Activated CD4-positive, alpha-beta T cell treated with anti-CD3 and anti-CD28 coated beads for 36 hours (primary cell): ENCODE measurements at regions of chr6 and their contacts with region 1.

Region 1: DNA sequence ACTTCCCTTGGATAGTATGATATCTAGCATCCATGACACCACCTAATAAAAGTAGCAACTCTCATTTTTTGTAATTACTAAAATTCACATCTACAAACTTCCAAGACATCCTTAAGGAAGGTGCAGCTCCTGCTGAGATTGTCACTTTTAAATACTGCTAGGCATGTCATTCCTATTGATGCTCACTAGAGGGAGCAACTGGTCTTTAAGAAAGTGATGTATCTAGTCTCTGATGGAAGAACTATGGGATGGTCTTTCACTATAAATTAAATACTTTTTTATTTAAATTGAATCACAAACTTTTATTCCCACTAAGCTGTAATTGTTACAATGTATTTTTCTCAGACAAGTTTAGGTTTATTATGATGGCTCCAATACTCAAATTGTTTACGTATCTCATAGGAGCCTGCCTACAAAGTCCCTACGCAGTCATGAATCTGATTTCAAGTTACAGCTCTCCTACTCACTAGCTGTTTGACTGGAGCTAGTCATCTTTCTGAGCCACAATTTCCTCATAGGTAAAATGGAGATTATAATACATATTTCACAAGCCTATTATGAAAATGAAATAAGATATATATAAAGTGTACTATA is 8.1 kb upstream of the TSPYL1 start:
- DNase-seq: no peak
- ATAC-seq: peak; percentile 72
- H3K4me3 Mint-ChIP-seq: no peak overlapping the region
- H3K27ac Mint-ChIP-seq: no peak overlapping the region
- H3K4me1 Mint-ChIP-seq: no peaks in the 10 kb centered on the region
- H3K27me3 Mint-ChIP-seq: no peaks in the 10 kb centered on the region

Region 2: DNA sequence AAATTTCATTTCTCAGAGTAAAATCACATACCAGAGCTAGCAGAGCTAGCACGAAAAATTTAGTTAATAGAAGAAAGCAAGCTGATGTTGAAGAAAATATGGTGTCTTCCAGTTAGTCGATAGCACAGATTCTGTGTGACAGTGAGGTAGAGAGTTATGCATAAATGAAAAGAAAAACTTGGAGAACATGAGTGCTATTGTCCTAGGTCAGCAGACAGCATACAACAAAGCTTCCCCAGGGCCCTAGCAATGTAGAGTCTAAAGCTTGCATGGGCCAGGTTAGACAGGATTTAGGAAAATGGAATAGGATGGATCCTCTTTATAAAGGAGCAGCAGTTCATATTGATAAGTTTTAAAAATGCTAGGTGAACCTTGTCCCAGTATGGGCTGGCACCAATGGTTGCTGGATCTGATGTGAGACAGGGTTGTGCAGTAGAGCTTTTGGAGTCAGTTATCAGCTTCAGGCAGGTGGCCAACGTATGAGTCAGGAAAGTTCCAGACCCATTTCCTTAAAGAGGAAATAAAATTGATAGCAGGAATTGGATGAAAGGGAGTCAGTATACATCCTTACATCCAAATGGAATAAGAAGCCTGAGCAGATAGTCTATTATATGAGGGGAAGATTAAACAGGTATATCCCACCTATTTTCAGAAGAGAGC is 504.3 kb before region 1 on chr6:
- CTCF ChIA-PET with region 1: no interaction called
- POLR2A ChIA-PET with region 1: no interaction called
- intact Hi-C with region 1: no loop called
- DNase-seq: no peak
- ATAC-seq: no peak
- H3K4me3 Mint-ChIP-seq: no peak overlapping the region
- H3K27ac Mint-ChIP-seq: no peak overlapping the region
- H3K4me1 Mint-ChIP-seq: no peaks in the 10 kb centered on the region
- H3K27me3 Mint-ChIP-seq: no peaks in the 10 kb centered on the region

Region 3: DNA sequence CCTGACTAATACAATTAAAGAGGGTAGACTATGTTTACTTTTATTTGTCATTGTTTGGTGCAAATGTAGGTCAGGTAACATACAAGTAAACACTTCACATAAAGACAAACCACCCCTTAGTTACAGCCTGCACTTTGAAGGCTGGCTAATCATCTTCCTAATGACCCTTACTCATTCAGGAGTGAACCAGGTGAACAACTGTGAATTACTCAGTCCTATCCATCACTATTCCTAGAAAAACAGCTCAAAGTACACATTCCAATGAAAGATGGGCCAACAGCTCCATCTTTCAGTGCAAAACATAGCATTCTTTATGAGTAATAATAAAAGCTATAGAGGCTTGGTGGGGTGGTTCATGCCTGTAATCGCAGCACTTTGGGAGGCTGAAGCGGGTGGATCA is 305.3 kb before region 1 on chr6:
- CTCF ChIA-PET with region 1: no interaction called
- POLR2A ChIA-PET with region 1: no interaction called
- intact Hi-C with region 1: no loop called
- DNase-seq: no peak
- ATAC-seq: no peak
- H3K4me3 Mint-ChIP-seq: no peak overlapping the region
- H3K27ac Mint-ChIP-seq: no peak overlapping the region
- H3K4me1 Mint-ChIP-seq: no peaks in the 10 kb centered on the region
- H3K27me3 Mint-ChIP-seq: peaks cover 4% of the 10 kb centered on the region

Region 4: GRCh38 chr6:116210750-116211425 is 76.9 kb before region 1 on chr6:
- CTCF ChIA-PET with region 1: no interaction called
- POLR2A ChIA-PET with region 1: no interaction called
- intact Hi-C with region 1: no loop called
- DNase-seq: no peak
- ATAC-seq: no peak
- H3K4me3 Mint-ChIP-seq: no peak overlapping the region
- H3K27ac Mint-ChIP-seq: no peak overlapping the region
- H3K4me1 Mint-ChIP-seq: no peaks in the 10 kb centered on the region
- H3K27me3 Mint-ChIP-seq: no peaks in the 10 kb centered on the region

Region 5: GRCh38 chr6:116268589-116269293 is 19.0 kb before region 1 on chr6:
- CTCF ChIA-PET with region 1: interaction called, 23 read pairs
- POLR2A ChIA-PET with region 1: no interaction called
- intact Hi-C with region 1: no loop called
- DNase-seq: no peak
- ATAC-seq: peak; percentile 72
- H3K4me3 Mint-ChIP-seq: no peak overlapping the region
- H3K27ac Mint-ChIP-seq: no peak overlapping the region
- H3K4me1 Mint-ChIP-seq: peaks cover 28% of the 10 kb centered on the region
- H3K27me3 Mint-ChIP-seq: no peaks in the 10 kb centered on the region

Region 6: GRCh38 chr6:116444092-116444491 is 156.3 kb after region 1 on chr6:
- CTCF ChIA-PET with region 1: interaction called, 10 read pairs
- POLR2A ChIA-PET with region 1: no interaction called
- intact Hi-C with region 1: no loop called
- DNase-seq: no peak
- ATAC-seq: peak; percentile 75
- H3K4me3 Mint-ChIP-seq: no peak overlapping the region
- H3K27ac Mint-ChIP-seq: no peak overlapping the region
- H3K4me1 Mint-ChIP-seq: peaks cover 9% of the 10 kb centered on the region
- H3K27me3 Mint-ChIP-seq: peaks cover 18% of the 10 kb centered on the region

Region 7: GRCh38 chr6:116542426-116542825 is 254.6 kb after region 1 on chr6:
- CTCF ChIA-PET with region 1: interaction called, 15 read pairs
- POLR2A ChIA-PET with region 1: no interaction called
- intact Hi-C with region 1: no loop called
- DNase-seq: no peak
- ATAC-seq: no peak
- H3K4me3 Mint-ChIP-seq: no peak overlapping the region
- H3K27ac Mint-ChIP-seq: no peak overlapping the region
- H3K4me1 Mint-ChIP-seq: no peaks in the 10 kb centered on the region
- H3K27me3 Mint-ChIP-seq: peaks cover 17% of the 10 kb centered on the region

Region 8: GRCh38 chr6:116561377-116562018 is 273.7 kb after region 1 on chr6:
- CTCF ChIA-PET with region 1: interaction called, 28 read pairs
- POLR2A ChIA-PET with region 1: no interaction called
- intact Hi-C with region 1: loop called in 1 of 2 experiments (anchors 1 kb)
- DNase-seq: peak; percentile 79
- ATAC-seq: peak; percentile 87
- H3K4me3 Mint-ChIP-seq: no peak overlapping the region
- H3K27ac Mint-ChIP-seq: no peak overlapping the region
- H3K4me1 Mint-ChIP-seq: peaks cover 1% of the 10 kb centered on the region
- H3K27me3 Mint-ChIP-seq: peaks cover 11% of the 10 kb centered on the region

Region 9: GRCh38 chr6:116741571-116741970 is 453.8 kb after region 1 on chr6:
- CTCF ChIA-PET with region 1: no interaction called
- POLR2A ChIA-PET with region 1: no interaction called
- intact Hi-C with region 1: no loop called
- DNase-seq: no peak
- ATAC-seq: no peak
- H3K4me3 Mint-ChIP-seq: no peak overlapping the region
- H3K27ac Mint-ChIP-seq: no peak overlapping the region
- H3K4me1 Mint-ChIP-seq: no peaks in the 10 kb centered on the region
- H3K27me3 Mint-ChIP-seq: no peaks in the 10 kb centered on the region